Right lobe of liver (tissue), 6 donors: ENCODE measurements at regions of chr22 and their contacts with region 1.

Region 1: DNA sequence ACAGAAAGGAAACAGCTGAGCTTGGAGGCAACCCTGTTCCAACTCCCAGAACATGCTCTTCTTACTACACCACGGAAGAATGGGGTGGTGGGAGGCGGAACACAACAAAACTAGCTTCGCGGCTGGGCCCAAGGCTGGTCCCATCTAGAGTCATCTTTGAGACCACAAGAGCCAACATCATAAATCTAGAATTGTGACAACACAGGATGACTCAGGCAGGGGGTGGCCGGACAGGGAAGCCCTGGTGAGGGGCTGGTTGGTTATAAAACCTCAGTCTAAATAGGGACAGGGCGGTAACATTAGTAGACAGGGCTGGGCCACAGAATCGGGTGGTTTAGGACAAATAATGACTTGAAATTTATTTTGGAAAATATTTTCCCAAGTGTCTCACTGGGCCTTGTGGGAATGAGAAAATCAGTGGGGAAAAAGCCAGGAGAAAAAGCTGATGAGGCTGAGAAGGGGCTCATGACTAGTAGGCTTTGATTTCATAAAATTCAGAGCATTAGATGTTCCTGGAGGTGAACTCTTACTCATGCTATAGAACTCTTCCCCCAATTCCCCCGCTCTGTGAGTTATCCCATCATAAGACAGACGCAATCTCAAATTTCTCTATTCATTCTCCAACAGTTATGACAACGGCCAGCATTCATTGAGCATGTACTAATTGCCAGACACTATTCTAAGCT is 151.8 kb upstream of the TIMP3 start:
- DNase-seq: no peak
- ATAC-seq: no peak
- H3K4me3 ChIP-seq: no peak overlapping the region
- H3K27ac ChIP-seq: no peak overlapping the region
- H3K4me1 ChIP-seq: peaks cover 0 to 4% (median under 1%) of the 10 kb centered on the region in 4 donors
- H3K27me3 ChIP-seq: no peaks in the 10 kb centered on the region
- CTCF ChIP-seq: no peak
- POLR2A ChIP-seq: no peak

Region 2: DNA sequence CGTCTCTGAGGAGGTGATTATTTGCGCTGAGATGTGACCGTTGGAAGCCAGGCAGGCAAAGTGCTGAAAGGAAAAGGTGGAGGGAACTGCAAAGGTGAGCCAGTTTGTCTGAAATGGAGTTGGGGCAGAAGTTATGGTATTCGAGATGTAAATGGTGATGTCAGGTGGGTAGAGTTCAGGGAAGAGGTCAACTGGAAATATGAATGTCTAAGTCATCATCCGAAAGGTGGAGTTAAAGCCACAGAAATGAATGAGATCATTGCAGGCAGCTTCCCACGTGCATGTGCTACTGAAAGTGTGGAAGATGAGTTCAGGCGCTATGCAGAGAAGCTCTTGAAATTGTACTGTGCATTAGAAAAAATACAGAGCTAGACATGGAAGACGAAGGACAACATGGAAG is 183.2 kb before region 1 on chr22:
- intact Hi-C with region 1: no loop called
- DNase-seq: no peak
- ATAC-seq: no peak
- H3K4me3 ChIP-seq: no peak overlapping the region
- H3K27ac ChIP-seq: no peak overlapping the region
- H3K4me1 ChIP-seq: no peaks in the 10 kb centered on the region
- H3K27me3 ChIP-seq: no peaks in the 10 kb centered on the region
- CTCF ChIP-seq: no peak
- POLR2A ChIP-seq: no peak

Region 3: GRCh38 chr22:32528984-32529982 is 120.4 kb before region 1 on chr22:
- intact Hi-C with region 1: loop called (anchors 10 kb)
- DNase-seq: peak; percentile 87 to 88 (median 88)
- ATAC-seq: peak; percentile 91 to 93 (median 92)
- H3K4me3 ChIP-seq: peak overlapping the region in 1 of 3 donors; percentile 32
- H3K27ac ChIP-seq: peak overlapping the region in 2 of 3 donors; percentile 50 to 51
- H3K4me1 ChIP-seq: peaks cover 0 to 24% (median 4%) of the 10 kb centered on the region in 4 donors
- H3K27me3 ChIP-seq: no peaks in the 10 kb centered on the region
- CTCF ChIP-seq: peak; percentile 85 to 94 (median 87)
- POLR2A ChIP-seq: no peak